IMR-90 (cell line): ENCODE measurements at regions of chr3 and their contacts with region 1.

Region 1: GRCh38 chr3:150830094-150830681 is 67.2 kb upstream of the SIAH2 start:
- DNase-seq: no peak
- ATAC-seq: no peak
- H3K4me3 ChIP-seq: no peak overlapping the region
- H3K27ac ChIP-seq: no peak overlapping the region
- H3K4me1 ChIP-seq: no peaks in the 10 kb centered on the region
- H3K27me3 ChIP-seq: peaks cover 17% of the 10 kb centered on the region
- CTCF ChIP-seq: no peak
- POLR2A ChIP-seq: no peak
- RAD21 ChIP-seq: no peak

Region 2: DNA sequence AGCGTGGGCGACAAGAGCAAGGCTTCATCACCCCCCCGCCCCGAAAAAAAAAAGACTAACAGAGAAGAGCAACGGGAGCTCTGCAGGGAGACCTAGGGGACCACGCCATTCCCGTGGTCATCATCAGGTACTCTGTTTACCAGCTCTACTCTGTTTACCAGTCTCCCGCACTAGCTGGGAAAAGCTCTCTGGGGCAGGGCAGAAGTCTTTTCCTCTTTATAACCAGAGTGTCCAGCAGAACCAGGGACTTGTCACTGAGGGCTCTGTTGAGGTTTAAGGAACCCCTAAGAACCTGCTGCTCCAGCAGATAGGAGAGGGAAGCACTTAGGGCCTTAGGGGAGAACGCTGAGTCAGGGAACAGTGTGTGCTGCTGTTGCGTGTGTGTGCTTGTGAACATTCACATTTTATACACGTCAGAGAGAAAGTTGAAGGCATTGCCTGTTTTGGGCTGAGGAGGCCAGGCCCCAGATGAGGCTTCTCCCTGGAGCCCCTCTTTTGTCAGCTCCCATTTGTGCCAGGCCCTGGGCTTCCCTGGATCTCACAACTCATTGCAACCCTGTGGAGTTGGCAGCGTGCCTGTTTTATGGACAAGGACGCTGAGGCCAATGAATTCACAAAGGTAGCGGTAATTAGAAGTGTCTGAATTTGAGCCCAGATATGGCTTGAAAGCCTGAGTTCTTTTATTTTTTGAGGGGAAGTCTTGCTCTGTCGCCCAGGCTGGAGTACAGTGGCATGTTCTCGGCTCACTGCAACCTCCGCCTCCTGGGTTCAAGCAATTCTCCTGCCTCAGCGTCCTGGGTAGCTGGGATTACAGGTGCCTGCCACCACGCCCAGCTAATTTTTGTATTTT is 102.3 kb before region 1 on chr3:
- CTCF ChIA-PET with region 1: no interaction called
- POLR2A ChIA-PET with region 1: no interaction called
- dilution Hi-C with region 1: no loop called
- in situ Hi-C with region 1: no loop called
- intact Hi-C with region 1: no loop called
- DNase-seq: no peak
- ATAC-seq: no peak
- H3K4me3 ChIP-seq: no peak overlapping the region
- H3K27ac ChIP-seq: no peak overlapping the region
- H3K4me1 ChIP-seq: no peaks in the 10 kb centered on the region
- H3K27me3 ChIP-seq: peaks cover 4% of the 10 kb centered on the region
- CTCF ChIP-seq: no peak
- POLR2A ChIP-seq: no peak
- RAD21 ChIP-seq: no peak

Region 3: DNA sequence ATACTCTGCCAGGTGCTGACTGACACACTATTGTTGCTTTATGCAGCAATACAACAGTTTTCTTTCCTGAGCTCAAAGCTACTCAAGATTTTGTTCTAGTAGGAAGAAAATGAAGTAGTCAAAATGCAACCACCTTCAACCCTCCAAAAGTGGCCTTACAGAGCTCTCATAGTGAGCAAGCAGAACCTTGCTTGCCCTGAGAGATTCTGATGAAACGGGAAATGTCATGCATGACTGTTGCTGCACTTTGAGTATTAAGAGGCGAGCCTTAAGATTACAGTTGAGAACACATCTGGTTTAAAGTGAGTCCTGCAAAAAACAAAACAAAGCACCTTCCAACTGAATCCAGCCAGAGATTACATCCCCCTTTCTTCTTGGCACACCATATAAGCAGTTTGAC is 45.4 kb after region 1 on chr3:
- CTCF ChIA-PET with region 1: no interaction called
- POLR2A ChIA-PET with region 1: no interaction called
- dilution Hi-C with region 1: no loop called
- in situ Hi-C with region 1: no loop called
- intact Hi-C with region 1: loop called (anchors 5 kb)
- DNase-seq: no peak
- ATAC-seq: no peak
- H3K4me3 ChIP-seq: no peak overlapping the region
- H3K27ac ChIP-seq: no peak overlapping the region
- H3K4me1 ChIP-seq: no peaks in the 10 kb centered on the region
- H3K27me3 ChIP-seq: peaks cover 24% of the 10 kb centered on the region
- CTCF ChIP-seq: no peak
- POLR2A ChIP-seq: no peak
- RAD21 ChIP-seq: no peak

Region 4: GRCh38 chr3:150936693-150937092 is 106.5 kb after region 1 on chr3:
- CTCF ChIA-PET with region 1: no interaction called
- POLR2A ChIA-PET with region 1: no interaction called
- dilution Hi-C with region 1: no loop called
- in situ Hi-C with region 1: no loop called
- intact Hi-C with region 1: no loop called
- DNase-seq: no peak
- ATAC-seq: no peak
- H3K4me3 ChIP-seq: no peak overlapping the region
- H3K27ac ChIP-seq: no peak overlapping the region
- H3K4me1 ChIP-seq: no peaks in the 10 kb centered on the region
- H3K27me3 ChIP-seq: peaks cover 8% of the 10 kb centered on the region
- CTCF ChIP-seq: no peak
- POLR2A ChIP-seq: no peak
- RAD21 ChIP-seq: no peak